SK-N-SH (cell line): ENCODE measurements at regions of chr5 and their contacts with region 1.

Region 1: DNA sequence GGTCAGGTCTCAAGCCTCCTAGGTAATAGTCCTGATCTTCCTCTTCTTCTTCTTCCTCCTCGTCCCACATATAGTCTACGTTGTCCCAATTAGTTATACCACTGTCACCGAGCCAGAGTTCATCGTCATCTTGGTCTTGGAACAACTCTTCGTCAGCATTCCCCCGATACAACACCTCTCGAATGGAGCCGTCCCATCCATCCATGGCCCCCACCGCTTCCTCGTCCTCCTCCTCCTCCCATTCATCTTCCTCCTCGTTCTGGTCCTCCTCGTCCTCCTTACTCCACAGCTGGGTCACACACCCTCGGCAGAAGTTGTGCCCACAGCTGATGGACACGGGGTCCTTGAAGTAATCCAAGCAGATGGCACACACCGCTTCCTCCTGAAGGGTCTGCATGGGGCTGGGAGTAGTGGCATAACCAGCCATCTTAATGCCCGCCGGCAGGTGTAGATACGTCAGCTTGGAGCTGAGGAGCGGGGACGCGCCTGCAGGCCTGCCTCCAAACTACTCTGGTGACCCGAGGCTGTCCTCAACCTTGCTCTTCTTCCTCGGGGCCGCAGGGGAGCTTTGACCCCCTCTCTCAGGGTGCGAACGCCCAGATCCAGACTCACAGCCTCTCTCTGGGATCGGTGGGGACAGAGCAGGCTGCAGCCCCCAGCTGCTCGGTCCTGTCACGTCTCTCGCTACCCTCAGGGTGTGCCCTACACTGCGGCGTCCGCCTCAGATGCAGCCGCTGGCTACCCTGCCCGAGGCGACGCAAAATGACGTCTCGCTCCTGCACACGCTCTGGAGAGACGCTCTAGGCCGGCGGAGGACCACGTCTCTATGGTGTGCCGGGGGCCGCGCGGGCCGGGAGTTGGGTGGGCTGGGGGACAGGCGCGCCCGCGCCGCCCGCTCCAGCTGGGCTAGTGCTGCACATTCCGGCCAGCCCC is at the start of gene TRIM52:
- DNase-seq: peak; percentile 88
- H3K4me3 ChIP-seq: peak within 1 kb of the TSS; percentile 84 to 97
- H3K27ac ChIP-seq: peak within 1 kb of the TSS; percentile 95 to 96
- H3K4me1 ChIP-seq: peaks cover 0 to 21% of the 10 kb centered on the region in 2 experiments; a peak in 2 of 4 replicates
- H3K27me3 ChIP-seq: no peaks in the 10 kb centered on the region
- CTCF ChIP-seq: no peak
- EP300 ChIP-seq: no peak
- RAD21 ChIP-seq: no peak
- polyA plus RNA-seq, gene TRIM52: 6.4 and 10.6 TPM in 2 replicates

Region 2: GRCh38 chr5:181176254-181176952 is 84.2 kb before region 1 on chr5:
- CTCF ChIA-PET with region 1: no interaction called
- POLR2A ChIA-PET with region 1: no interaction called
- DNase-seq: no peak
- H3K4me3 ChIP-seq: no peak overlapping the region
- H3K27ac ChIP-seq: no peak overlapping the region
- H3K4me1 ChIP-seq: no peaks in the 10 kb centered on the region
- H3K27me3 ChIP-seq: no peaks in the 10 kb centered on the region
- CTCF ChIP-seq: no peak
- EP300 ChIP-seq: no peak
- RAD21 ChIP-seq: no peak

Region 3: DNA sequence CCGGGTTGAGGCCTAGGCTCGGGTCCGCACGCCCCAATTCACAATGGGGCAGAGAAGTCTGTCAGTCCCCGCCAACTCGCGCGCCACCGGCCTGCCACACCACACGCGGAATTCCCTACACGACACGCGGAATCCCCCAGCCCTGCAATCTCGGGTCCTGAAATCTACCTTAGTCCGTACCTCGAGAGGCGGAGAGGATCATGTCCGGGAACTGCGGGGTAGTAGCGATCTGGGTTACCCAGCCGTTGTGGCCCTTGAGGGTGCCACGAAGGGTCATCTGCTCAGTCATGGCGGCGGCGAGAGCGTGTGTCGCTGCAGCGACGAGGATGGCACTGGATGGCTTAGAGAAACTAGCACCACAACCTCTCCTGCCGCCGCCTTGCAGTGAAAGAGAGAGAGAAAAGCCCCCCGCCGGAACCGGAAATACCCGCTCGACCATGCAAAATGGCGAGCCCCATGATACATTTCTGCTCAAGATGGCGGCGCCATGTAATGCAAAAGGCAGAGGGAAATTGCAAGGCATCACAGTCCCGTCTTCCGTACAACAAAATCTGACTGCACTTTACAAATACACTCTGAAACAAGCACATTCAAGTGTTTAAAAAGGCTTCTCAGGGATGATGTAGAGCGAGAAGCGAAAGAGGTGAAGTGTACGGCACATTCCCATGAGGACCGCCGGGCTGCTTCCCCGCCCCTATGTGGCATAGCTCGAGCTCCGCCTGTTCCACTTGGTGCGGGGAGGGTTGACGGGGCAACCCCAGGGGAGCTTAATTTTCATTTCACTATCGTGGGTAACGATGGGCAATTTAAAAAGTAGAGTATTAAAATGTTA is 16.9 kb before region 1 on chr5 and contains the start of gene RACK1:
- CTCF ChIA-PET with region 1: interaction called, 6 read pairs
- POLR2A ChIA-PET with region 1: interaction called, 22 read pairs
- DNase-seq: peak; percentile 84
- H3K4me3 ChIP-seq: peak within 1 kb of the TSS; percentile 79 to 82
- H3K27ac ChIP-seq: peak within 1 kb of the TSS; percentile 96 to 98
- H3K4me1 ChIP-seq: peaks cover 20 to 37% of the 10 kb centered on the region in 2 experiments; a peak in 3 of 4 replicates
- H3K27me3 ChIP-seq: no peaks in the 10 kb centered on the region
- CTCF ChIP-seq: no peak
- EP300 ChIP-seq: peak in 1 of 2 experiments; percentile 3; a peak in 1 of 4 replicates
- RAD21 ChIP-seq: no peak
- polyA plus RNA-seq, gene RACK1: 4,191 and 4,715 TPM in 2 replicates

Region 4: GRCh38 chr5:181281077-181281983 is 20.7 kb after region 1 on chr5:
- CTCF ChIA-PET with region 1: interaction called, 7 read pairs
- POLR2A ChIA-PET with region 1: interaction called, 20 read pairs
- DNase-seq: peak; percentile 94
- H3K4me3 ChIP-seq: peak overlapping the region; percentile 70 to 82
- H3K27ac ChIP-seq: peak overlapping the region; percentile 86 to 97
- H3K4me1 ChIP-seq: peaks cover 0 to 9% of the 10 kb centered on the region in 2 experiments; a peak in 1 of 4 replicates
- H3K27me3 ChIP-seq: no peaks in the 10 kb centered on the region
- CTCF ChIP-seq: no peak
- EP300 ChIP-seq: no peak
- RAD21 ChIP-seq: no peak